H1 (cell line): ENCODE measurements at regions of chr4 and their contacts with region 1.

Region 1: GRCh38 chr4:88523325-88524129 is at the start of gene PYURF:
- DNase-seq: peak; percentile 73 to 95
- H3K4me3 ChIP-seq: peak within 1 kb of the TSS; percentile 74 to 88 (median 79)
- H3K27ac ChIP-seq: peak within 1 kb of the TSS; percentile 39; the same call in 1 of the 2 replicates
- H3K4me1 ChIP-seq: peaks cover 3 to 6% (median 4%) of the 10 kb centered on the region in 4 experiments; a peak in 6 of 7 replicates
- H3K27me3 ChIP-seq: no peaks in the 10 kb centered on the region
- CTCF ChIP-seq: no peak
- EP300 ChIP-seq: no peak
- POLR2A ChIP-seq: peak; percentile 67 to 88
- RAD21 ChIP-seq: no peak
- total RNA-seq, gene PYURF: 44.8 and 45.2 TPM in 2 replicates

Region 2: DNA sequence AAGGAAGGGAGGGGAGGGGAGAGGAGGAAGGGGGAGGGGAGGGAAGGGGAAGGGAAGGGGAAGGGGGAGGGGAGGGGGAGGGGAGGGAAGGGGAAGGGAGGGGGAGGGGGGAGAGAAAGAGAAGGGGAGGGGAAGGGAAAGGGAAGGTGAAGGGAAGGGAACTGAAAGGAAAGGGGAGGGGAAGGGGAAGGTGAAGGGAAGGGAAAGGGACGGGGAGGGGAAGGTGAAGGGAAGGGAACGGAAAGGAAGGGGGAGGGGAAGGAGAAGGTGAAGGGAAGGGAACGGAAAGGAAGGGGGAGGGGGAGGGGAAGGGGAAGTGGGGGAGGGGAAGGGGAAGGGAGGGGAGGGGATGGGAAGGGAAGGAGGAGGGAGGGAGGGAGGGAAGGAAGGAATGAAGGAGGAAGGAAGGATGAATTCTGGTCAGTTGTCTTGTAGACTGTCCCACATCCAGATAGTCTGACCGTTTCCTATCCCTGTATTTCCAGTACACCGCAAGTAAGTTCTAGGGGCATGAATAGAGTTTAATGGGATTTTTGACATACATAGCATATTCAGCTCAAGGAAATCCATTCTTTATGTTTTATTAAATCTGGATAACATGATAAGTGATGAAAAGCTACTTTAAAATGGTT is 46.2 kb before region 1 on chr4:
- CTCF ChIA-PET with region 1: no interaction called
- POLR2A ChIA-PET with region 1: no interaction called
- DNase-seq: no peak
- H3K4me3 ChIP-seq: no peak overlapping the region
- H3K27ac ChIP-seq: no peak overlapping the region
- H3K4me1 ChIP-seq: no peaks in the 10 kb centered on the region
- H3K27me3 ChIP-seq: no peaks in the 10 kb centered on the region
- CTCF ChIP-seq: no peak
- EP300 ChIP-seq: no peak
- POLR2A ChIP-seq: no peak
- RAD21 ChIP-seq: no peak

Region 3: DNA sequence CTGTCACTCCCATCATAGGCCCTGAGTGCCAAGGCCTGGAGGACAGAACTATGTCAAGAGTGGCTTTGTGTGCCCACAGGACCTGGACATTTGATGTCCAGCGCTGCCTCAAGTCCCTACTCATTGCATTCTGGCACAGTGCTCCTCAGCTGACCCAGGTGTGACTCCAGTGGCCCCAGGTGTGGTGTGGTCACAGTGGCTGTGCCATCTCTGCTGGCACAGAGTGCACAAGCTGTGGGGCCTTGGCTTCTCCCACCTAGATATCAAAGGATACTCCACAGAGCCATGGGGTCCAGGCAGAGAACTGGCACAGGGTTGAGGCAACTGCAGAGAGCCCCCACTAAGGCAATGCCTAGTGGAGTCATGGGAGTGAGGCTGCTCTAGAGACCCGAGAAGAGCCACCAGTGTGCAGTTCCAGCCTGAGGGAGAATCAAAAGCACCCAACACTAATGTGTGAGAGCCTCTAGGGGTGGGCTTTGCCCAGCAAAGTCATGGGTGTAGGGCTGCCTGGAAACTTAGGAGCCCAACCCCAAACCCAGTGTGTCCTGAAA is 25.6 kb before region 1 on chr4:
- CTCF ChIA-PET with region 1: no interaction called
- POLR2A ChIA-PET with region 1: no interaction called
- DNase-seq: no peak
- H3K4me3 ChIP-seq: no peak overlapping the region
- H3K27ac ChIP-seq: no peak overlapping the region
- H3K4me1 ChIP-seq: no peaks in the 10 kb centered on the region
- H3K27me3 ChIP-seq: no peaks in the 10 kb centered on the region
- CTCF ChIP-seq: no peak
- EP300 ChIP-seq: no peak
- POLR2A ChIP-seq: no peak
- RAD21 ChIP-seq: no peak

Region 4: DNA sequence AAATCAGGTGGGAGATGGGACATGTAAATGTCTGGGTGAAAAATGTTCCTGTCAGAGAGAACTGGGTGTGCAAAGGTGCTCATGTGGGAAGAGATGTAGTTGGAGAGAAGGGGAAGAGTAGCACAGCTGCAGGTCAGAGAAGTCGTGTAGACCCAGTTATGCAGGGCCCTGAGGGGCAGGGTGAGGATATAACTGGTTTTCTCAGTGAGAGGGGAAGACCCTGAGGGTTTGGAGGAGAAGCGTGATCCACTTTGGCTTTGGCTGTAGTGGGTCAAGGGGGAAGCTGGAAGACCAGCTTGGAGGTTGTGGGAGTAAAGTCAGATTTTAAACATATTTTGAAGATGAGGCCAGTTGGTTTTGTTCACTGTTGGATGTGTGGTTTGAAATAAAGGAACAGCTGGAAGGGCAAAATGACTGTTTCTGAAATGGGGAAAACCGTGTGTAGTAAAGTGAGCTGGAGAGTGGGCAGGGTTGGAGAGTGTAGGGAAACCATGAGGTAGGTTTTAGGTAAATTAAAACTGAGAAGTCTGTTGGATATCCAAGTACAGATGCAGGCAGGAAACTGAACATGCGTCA is 129.9 kb after region 1 on chr4:
- CTCF ChIA-PET with region 1: interaction called, 15 read pairs
- POLR2A ChIA-PET with region 1: no interaction called
- DNase-seq: no peak
- H3K4me3 ChIP-seq: no peak overlapping the region
- H3K27ac ChIP-seq: no peak overlapping the region
- H3K4me1 ChIP-seq: no peaks in the 10 kb centered on the region; a peak in 2 of 7 replicates
- H3K27me3 ChIP-seq: no peaks in the 10 kb centered on the region
- CTCF ChIP-seq: no peak
- EP300 ChIP-seq: no peak
- POLR2A ChIP-seq: no peak
- RAD21 ChIP-seq: no peak

Region 5: DNA sequence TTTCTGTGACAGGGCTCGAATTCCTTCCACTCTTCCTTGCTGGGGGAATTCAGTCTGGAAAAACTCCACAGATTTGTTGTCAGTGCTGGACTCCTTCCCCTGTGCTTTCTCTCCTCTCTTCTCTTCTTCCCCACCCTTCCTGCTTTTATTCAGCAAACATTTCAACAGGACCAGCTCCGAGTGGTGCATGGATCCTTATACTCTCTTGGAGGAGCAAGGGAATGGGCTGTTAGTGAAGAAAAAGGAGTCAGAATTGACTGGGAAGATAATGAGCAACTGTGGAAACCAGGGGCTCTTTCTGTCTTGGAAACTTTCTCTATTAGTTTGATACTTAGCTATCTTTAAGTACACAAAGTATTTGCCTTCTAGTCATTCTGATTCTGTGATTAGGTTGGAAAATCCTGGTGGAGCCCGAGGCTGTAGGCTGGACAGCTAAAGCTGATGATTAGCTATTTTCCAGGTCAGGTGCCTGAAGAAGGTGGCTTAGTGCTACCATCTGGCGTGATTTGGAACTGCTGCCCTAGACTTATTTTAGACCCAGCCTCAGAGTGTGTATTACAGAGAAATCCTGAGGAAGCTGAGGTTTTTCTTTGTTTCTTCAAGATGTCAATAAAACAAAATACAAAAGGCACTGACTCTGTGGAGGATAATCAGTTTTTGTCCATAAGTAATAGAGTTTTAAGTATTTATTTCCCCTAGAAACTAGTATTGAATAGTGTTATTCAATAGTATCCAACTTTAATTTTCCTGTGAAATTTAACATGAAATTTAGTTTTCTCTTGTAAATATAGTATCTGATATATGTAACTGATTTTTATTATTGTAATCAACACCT is 135.7 kb after region 1 on chr4:
- CTCF ChIA-PET with region 1: interaction called, 32 read pairs
- POLR2A ChIA-PET with region 1: interaction called, 4 read pairs
- DNase-seq: no peak
- H3K4me3 ChIP-seq: no peak overlapping the region
- H3K27ac ChIP-seq: 0 out of 2 replicates have a peak overlapping the region, but pooled peaks have one; percentile 1
- H3K4me1 ChIP-seq: no peaks in the 10 kb centered on the region; a peak in 1 of 7 replicates
- H3K27me3 ChIP-seq: no peaks in the 10 kb centered on the region
- CTCF ChIP-seq: peak; percentile 38 to 85 (median 84)
- EP300 ChIP-seq: no peak
- POLR2A ChIP-seq: no peak
- RAD21 ChIP-seq: peak; percentile 91 to 95